Activated T-helper 1 cell treated with anti-CD3 and anti-CD28 coated beads, Interleukin-12 subunit alpha, Interleukin-12 subunit beta, Interleukin-2, Interleukin-4 antibody, amounts not matched to agents 30 ng/mL and 10 ng/mL and 1 ng/mL, durations not matched to agents 14 hours and 24 hours and 36 hours (primary cell): ENCODE measurements at regions of chr14 and their contacts with region 1.

Region 1: DNA sequence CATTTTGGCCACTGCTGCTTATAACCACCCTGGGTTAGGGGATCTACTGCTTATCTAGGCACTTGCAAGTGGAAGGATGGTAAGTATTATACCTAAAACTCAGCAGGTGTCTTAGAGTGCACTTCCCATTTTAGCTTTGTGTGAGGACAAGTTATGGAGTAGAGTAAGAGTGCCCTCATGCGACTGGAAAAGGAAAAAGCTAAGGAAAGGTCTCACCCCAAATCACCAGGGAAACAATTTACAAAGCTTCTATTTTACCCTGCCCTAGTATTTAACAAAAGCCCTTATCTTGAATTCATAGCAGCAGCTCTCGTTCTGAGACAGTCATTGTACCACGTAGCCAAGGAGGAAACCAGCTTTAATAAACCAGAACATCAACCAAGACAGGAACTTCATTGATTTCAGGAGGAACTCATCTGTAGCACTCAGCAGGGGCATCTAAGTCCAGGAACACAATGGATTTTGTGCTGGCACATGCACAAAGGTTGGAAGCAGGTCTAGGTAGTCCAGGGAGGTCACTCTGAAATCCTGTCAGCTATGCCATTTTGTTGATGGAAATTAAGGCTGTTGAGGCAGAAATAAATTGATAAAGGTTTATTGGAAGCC is 2.9 kb downstream of the RDH12 start:
- DNase-seq: peak; percentile 12
- H3K4me3 Mint-ChIP-seq: no peak overlapping the region
- H3K27ac Mint-ChIP-seq: no peak overlapping the region
- H3K4me1 Mint-ChIP-seq: no peaks in the 10 kb centered on the region
- H3K27me3 Mint-ChIP-seq: peaks cover 4% of the 10 kb centered on the region

Region 2: GRCh38 chr14:67426983-67427606 is 277.5 kb before region 1 on chr14:
- intact Hi-C with region 1: loop called (anchors 1 kb)
- DNase-seq: peak; percentile 61
- H3K4me3 Mint-ChIP-seq: no peak overlapping the region
- H3K27ac Mint-ChIP-seq: no peak overlapping the region
- H3K4me1 Mint-ChIP-seq: peaks cover 7% of the 10 kb centered on the region
- H3K27me3 Mint-ChIP-seq: peaks cover 27% of the 10 kb centered on the region

Region 3: GRCh38 chr14:67583711-67584644 is 120.6 kb before region 1 on chr14:
- intact Hi-C with region 1: loop called (anchors 1 kb)
- DNase-seq: peak; percentile 12
- H3K4me3 Mint-ChIP-seq: no peak overlapping the region
- H3K27ac Mint-ChIP-seq: no peak overlapping the region
- H3K4me1 Mint-ChIP-seq: peaks cover 6% of the 10 kb centered on the region
- H3K27me3 Mint-ChIP-seq: no peaks in the 10 kb centered on the region

Region 4: DNA sequence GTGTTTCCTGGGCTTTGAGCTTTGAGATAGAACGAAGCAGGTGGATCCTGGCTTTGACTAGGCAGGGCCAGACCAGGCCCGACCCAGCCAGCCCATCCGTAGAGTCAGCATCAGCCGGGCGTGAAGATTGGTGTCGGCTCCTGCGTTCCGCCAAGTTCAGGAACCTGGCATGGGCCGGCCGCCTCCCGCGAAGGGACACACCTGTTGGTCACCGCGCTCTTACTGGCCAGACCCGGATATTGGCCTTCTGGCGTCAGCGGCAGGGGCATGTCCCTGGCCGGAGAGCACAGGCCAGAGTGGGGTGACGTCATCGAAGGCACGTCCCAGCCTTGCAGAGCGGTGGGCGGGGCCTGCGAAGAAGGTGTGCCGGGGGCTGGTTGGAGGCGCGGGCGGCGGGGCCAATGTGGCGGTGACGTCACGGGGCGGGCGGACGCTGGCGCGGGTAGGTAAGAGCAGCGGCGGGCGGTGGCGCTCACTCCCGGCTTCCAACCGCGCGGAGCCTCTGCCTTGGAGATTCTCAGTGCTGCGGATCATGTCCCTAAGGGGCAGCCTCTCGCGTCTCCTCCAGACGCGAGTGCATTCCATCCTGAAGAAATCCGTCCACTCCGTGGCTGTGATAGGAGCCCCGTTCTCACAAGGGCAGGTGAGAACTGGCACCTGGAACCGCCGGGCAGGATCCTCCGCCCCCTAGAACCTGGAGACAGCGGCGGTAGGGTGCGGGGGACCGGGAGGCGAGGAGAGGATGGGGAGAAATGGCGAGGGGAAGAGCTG is 85.0 kb before region 1 on chr14 and contains the start of gene ARG2:
- intact Hi-C with region 1: loop called (anchors 1 kb)
- DNase-seq: peak; percentile 94
- H3K4me3 Mint-ChIP-seq: peak within 1 kb of the TSS; percentile 86
- H3K27ac Mint-ChIP-seq: peak within 1 kb of the TSS; percentile 71
- H3K4me1 Mint-ChIP-seq: peaks cover 39% of the 10 kb centered on the region
- H3K27me3 Mint-ChIP-seq: peaks cover 14% of the 10 kb centered on the region
- total RNA-seq, gene ARG2: 5.2 and 7.1 TPM in 2 replicates

Region 5: DNA sequence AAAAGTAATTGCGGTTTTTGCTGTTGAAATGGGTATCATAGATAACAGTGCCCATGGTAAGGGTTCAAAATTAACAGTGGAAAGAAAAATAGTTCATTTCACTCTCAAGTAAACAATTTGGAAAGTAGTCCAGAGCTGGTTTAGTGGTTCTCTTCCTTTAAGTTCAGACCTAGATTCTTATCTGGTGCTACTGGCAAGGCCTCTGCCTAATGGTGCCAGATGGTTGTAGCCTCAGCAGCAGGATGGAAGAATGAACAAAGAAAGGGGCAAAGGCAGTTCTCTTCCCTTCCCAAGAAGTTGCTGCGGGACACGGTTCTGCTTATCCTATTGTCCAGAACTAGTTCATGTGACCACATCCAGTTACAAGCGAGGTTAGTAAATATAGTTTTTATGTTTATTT is 74.4 kb before region 1 on chr14:
- intact Hi-C with region 1: no loop called
- DNase-seq: no peak
- H3K4me3 Mint-ChIP-seq: no peak overlapping the region
- H3K27ac Mint-ChIP-seq: no peak overlapping the region
- H3K4me1 Mint-ChIP-seq: no peaks in the 10 kb centered on the region
- H3K27me3 Mint-ChIP-seq: no peaks in the 10 kb centered on the region

Region 6: GRCh38 chr14:67674481-67675169 is 30.0 kb before region 1 on chr14 and contains the start of gene VTI1B:
- intact Hi-C with region 1: loop called (anchors 2 kb)
- DNase-seq: peak; percentile 70
- H3K4me3 Mint-ChIP-seq: peak within 1 kb of the TSS; percentile 90
- H3K27ac Mint-ChIP-seq: peak within 1 kb of the TSS; percentile 87
- H3K4me1 Mint-ChIP-seq: peaks cover 41% of the 10 kb centered on the region
- H3K27me3 Mint-ChIP-seq: no peaks in the 10 kb centered on the region
- total RNA-seq, gene VTI1B: 77.7 and 77.8 TPM in 2 replicates